Endothelial cell of umbilical vein (primary cell): ENCODE measurements at regions of chrX and their contacts with region 1.

Region 1: GRCh38 chrX:45186643-45187026 is 14.0 kb downstream of the DIPK2B start:
- DNase-seq: no peak
- H3K4me3 ChIP-seq: peak overlapping the region in 1 of 3 experiments; percentile 46
- H3K27ac ChIP-seq: no peak overlapping the region
- H3K4me1 ChIP-seq: peaks cover 9% of the 10 kb centered on the region
- H3K27me3 ChIP-seq: no peaks in the 10 kb centered on the region
- CTCF ChIP-seq: no peak
- POLR2A ChIP-seq: no peak

Region 2: GRCh38 chrX:45083314-45083713 is 103.3 kb before region 1 on chrX:
- CTCF ChIA-PET with region 1: no interaction called
- POLR2A ChIA-PET with region 1: no interaction called
- dilution Hi-C with region 1: no loop called
- intact Hi-C with region 1: loop called (anchors 10 kb)
- DNase-seq: peak; percentile 65
- H3K4me3 ChIP-seq: no peak overlapping the region
- H3K27ac ChIP-seq: peak overlapping the region; percentile 45
- H3K4me1 ChIP-seq: peaks cover 7% of the 10 kb centered on the region
- H3K27me3 ChIP-seq: no peaks in the 10 kb centered on the region
- CTCF ChIP-seq: no peak
- POLR2A ChIP-seq: no peak

Region 3: GRCh38 chrX:45758319-45758718 is 571.7 kb after region 1 on chrX:
- CTCF ChIA-PET with region 1: no interaction called
- POLR2A ChIA-PET with region 1: no interaction called
- dilution Hi-C with region 1: no loop called
- intact Hi-C with region 1: loop called (anchors 10 kb)
- DNase-seq: peak; percentile 86
- H3K4me3 ChIP-seq: peak overlapping the region in 1 of 3 experiments; percentile 23
- H3K27ac ChIP-seq: peak overlapping the region; percentile 94
- H3K4me1 ChIP-seq: peaks cover 90% of the 10 kb centered on the region
- H3K27me3 ChIP-seq: no peaks in the 10 kb centered on the region
- CTCF ChIP-seq: no peak
- POLR2A ChIP-seq: no peak